ENCODE measurements at regions of chr1 and their contacts with region 1.

Region 1: GRCh38 chr1:225777583-225778336 is at the start of gene SRP9:
- DNase-seq: peak; percentile 98
- total RNA-seq, gene SRP9: 368 and 386 TPM in 2 replicates

Region 2: GRCh38 chr1:225498549-225499136 is 279.1 kb before region 1 on chr1:
- in situ Hi-C with region 1: loop called (anchors 10 kb)
- DNase-seq: no peak

Region 3: DNA sequence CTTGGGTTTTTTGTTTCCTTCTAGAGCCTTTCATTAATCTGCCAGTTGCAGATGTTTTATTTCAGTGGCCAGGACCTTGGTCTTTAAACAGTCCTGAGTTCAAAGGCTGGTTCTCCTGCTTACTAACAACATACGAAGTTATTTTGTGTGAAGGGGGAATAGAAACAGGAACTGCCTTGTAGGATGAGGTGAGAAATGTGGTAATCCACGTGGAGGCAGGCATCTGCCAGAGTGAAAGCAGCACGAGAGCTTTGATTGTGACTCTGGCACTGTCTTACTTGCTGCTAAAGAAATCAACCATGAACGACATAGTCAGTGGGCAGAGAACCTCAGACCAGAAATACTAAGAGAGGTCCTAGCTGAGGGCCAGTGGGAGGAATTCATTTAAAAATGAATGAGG is 74.0 kb after region 1 on chr1:
- in situ Hi-C with region 1: no loop called
- DNase-seq: no peak